Activated naive CD4-positive, alpha-beta T cell treated with anti-CD3 and anti-CD28 coated beads for 36 hours (primary cell): ENCODE measurements at regions of chr6 and their contacts with region 1.

Region 1: GRCh38 chr6:20919677-20920385 is 385.6 kb downstream of the CDKAL1 start:
- DNase-seq: peak; percentile 33
- H3K4me3 Mint-ChIP-seq: no peak overlapping the region
- H3K27ac Mint-ChIP-seq: peak overlapping the region; percentile 3
- H3K4me1 Mint-ChIP-seq: peaks cover 25% of the 10 kb centered on the region
- H3K27me3 Mint-ChIP-seq: no peaks in the 10 kb centered on the region

Region 2: DNA sequence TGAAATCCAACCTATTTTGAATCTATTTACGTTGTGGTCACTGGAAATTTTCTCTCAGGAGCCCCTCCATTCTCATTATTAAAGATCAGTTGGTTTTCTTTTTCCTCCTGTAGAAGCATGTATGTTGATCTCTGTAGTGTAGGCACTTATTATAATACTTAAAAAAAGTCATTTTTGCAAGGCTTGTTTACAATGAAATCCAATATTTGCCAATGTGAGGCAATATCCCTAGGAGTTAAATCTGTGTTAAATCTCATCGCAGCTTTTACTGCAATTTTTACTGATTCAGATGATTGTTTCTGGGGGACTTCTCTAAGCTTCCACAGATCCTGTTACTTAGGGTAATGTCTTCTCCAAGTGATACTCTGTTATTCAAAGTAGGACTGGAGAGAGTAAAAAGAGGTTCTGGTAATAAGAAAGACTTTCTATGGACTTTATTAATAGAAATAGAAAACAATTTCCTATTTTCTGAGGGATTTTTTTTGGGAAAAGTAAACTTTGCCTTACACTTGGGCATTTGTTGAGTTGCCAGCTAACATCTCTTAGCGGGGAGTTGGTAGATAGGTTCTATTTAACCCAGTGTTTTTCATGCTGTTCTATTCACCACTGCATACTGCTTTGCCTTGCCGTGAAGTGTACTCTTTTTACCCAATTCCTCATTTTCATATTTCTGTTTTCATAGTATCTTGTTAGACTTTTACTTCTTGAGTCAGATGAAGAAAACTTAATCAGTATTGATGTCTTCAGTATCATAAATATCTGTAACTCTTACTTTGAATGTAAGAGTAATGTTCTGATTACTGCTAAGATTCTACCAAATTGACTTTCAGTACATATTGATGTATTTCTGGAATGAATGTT is 337.0 kb before region 1 on chr6:
- CTCF ChIA-PET with region 1: no interaction called
- intact Hi-C with region 1: loop called (anchors 2 kb)
- DNase-seq: no peak
- H3K4me3 Mint-ChIP-seq: no peak overlapping the region
- H3K27ac Mint-ChIP-seq: no peak overlapping the region
- H3K4me1 Mint-ChIP-seq: peaks cover 21% of the 10 kb centered on the region
- H3K27me3 Mint-ChIP-seq: no peaks in the 10 kb centered on the region

Region 3: DNA sequence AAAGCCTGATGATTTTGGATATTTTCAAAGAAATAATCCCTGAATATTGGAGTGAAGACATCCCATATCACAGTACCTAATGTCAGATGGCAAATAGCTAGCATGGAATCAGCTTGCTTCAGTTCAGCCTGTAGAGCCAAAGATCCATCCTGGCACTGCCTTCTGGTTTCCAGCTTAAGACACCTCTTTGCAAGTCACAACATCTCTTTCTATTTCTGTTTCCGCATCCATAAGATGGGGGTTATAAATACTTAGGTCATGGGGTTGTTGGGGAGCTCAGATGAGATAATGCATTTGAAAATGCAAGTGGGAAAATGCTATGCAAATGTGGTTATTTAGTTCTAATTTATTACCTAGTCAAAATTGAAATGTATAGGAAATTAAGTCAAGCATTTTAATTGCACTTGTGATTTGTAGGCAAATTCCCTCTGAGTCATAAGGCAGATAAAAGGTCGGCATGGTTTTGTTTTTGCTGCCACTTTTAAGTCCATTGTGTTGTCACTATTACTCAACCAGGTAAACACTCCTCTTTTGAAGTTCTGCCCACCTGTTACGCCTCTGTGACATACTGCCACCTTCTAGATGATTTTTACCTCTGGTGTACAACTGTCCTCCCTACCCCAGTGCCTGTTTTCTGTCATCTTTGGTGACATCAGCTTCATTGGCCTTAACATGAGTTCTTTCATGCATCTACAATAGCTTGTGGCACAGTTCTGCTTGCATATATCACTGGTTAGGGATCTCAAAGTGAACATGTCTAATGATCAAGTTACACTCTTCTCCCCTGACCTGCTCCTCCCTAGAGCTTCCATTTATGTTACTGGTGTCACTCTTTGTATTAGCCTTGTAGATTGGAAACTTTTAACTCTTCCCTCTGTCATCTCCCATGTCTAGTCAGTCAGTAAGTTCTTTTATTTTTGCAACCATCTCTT is 288.9 kb before region 1 on chr6:
- CTCF ChIA-PET with region 1: no interaction called
- intact Hi-C with region 1: loop called (anchors 1 kb)
- DNase-seq: peak; percentile 46
- H3K4me3 Mint-ChIP-seq: no peak overlapping the region
- H3K27ac Mint-ChIP-seq: peak overlapping the region; percentile 17
- H3K4me1 Mint-ChIP-seq: peaks cover 42% of the 10 kb centered on the region
- H3K27me3 Mint-ChIP-seq: no peaks in the 10 kb centered on the region

Region 4: GRCh38 chr6:20839630-20840029 is 80.2 kb before region 1 on chr6:
- CTCF ChIA-PET with region 1: no interaction called
- intact Hi-C with region 1: loop called (anchors 5 kb)
- DNase-seq: no peak
- H3K4me3 Mint-ChIP-seq: no peak overlapping the region
- H3K27ac Mint-ChIP-seq: no peak overlapping the region
- H3K4me1 Mint-ChIP-seq: peaks cover 20% of the 10 kb centered on the region
- H3K27me3 Mint-ChIP-seq: no peaks in the 10 kb centered on the region

Region 5: DNA sequence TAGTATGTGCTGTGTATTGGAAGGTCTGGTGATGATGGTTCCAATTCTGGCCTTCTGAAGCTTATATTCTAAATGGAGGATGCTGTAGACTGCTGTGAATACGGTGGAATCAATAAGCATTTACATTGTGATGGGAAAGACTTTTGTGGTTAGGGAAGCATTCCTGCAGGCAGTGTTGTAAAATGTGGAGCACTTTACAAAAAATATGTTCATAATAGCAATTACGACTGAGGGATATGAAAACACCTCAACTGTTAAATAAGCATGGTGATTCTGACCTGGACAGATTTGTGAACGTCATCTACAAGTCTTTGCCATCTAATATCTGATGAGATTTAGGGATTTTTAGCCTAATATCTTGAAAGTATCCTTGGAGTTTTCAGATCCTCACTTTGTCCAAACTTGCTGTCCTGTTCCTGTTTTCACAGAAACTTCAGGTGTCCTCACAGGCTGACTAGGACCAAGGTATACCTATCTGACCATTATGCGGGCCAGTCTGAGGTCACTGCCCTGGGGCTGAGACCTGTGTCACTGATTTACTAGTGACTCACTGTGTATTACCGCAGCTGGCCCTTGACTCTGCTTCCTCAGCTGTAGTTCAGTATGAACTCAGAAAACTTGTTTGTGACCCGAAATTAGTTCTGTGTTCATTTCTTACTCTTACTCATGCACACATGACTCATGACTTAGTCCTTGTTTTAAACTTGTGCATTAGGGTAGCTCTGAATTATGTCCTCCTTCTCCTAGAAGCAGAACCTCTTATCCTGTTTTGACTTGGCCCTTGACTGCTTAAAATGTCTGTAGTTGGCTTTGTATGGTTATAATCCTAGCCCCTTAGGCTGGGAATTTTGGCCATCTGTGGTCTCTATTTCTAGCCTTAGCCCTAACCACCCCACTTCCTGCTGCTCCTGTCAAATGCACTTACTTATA is 42.6 kb before region 1 on chr6:
- CTCF ChIA-PET with region 1: no interaction called
- intact Hi-C with region 1: loop called (anchors 2 kb)
- DNase-seq: peak; percentile 38
- H3K4me3 Mint-ChIP-seq: no peak overlapping the region
- H3K27ac Mint-ChIP-seq: no peak overlapping the region
- H3K4me1 Mint-ChIP-seq: peaks cover 9% of the 10 kb centered on the region
- H3K27me3 Mint-ChIP-seq: no peaks in the 10 kb centered on the region